ENCODE measurements at regions of chr5 and their contacts with region 1.

Region 1: DNA sequence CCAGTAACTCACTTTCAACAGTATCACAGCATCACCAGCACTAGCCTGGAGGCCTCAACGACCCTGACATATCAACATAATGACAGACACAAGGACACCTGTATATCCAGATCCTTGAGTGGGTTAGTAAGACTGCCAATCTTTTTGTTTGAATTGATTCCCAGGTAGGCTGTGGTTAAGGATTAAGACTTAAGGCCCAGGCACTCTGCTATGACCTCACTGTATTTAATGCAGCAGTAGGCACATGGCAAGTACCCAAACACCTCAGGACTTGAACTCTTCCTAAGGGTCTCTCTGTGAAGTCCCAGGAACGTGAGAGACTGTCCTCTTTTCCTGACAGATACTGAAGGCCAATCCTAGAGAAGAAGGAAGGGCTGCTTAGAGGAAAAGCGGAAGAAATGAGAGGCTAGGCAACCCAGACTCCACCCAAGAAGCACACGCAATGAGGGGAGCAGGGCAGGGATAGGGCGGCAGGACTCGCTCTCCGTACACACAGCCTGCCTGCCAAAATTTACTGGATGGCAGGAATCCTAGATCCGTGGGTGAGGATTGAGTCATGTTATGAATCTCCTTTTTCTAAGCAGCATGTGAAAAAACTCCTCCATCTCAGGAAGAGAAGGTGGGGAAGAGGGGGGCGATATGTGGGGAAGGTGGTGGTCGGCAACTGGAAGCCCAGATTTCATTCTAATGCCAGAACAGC is 93.4 kb downstream of the SIL1 start:
- DNase-seq: peak; percentile 90
- H3K4me3 ChIP-seq: peak overlapping the region in 1 of 4 donors; percentile 0
- H3K27ac ChIP-seq: peak overlapping the region; percentile 72 to 88 (median 84)
- H3K4me1 ChIP-seq: peaks cover 0 to 55% (median 48%) of the 10 kb centered on the region in 4 donors
- H3K27me3 ChIP-seq: no peaks in the 10 kb centered on the region
- CTCF ChIP-seq: no peak
- EP300 ChIP-seq: no peak
- POLR2A ChIP-seq: no peak

Region 2: DNA sequence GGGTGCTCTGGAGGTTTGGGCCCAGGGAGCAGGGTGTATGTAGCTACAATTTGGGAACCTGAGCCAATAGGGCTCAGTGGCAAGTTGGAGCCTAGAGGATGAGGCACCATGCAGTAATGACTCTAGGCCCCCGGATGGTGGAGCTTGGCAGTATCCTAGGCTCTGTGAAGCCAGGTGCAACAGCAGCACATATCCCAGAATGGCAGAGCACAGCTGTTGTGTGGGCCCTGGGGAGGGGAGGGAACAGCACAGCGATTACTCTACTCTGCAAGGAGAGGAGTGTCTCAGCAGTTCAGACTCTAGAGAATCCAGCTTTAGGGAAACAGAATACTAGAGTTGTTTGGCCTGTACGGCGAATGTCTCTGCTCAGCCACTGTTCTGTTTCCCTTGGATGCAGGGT is 285.6 kb before region 1 on chr5:
- intact Hi-C with region 1: no loop called
- DNase-seq: no peak
- H3K4me3 ChIP-seq: no peak overlapping the region
- H3K27ac ChIP-seq: no peak overlapping the region
- H3K4me1 ChIP-seq: peaks cover 0 to 27% (median 23%) of the 10 kb centered on the region in 4 donors
- H3K27me3 ChIP-seq: no peaks in the 10 kb centered on the region
- CTCF ChIP-seq: no peak
- EP300 ChIP-seq: no peak
- POLR2A ChIP-seq: no peak

Region 3: GRCh38 chr5:139197710-139198669 is 93.3 kb after region 1 on chr5 and contains the start of gene SIL1:
- intact Hi-C with region 1: loop called (anchors 5 kb)
- DNase-seq: peak; percentile 98
- H3K4me3 ChIP-seq: peak within 1 kb of the TSS; percentile 63 to 75 (median 69)
- H3K27ac ChIP-seq: peak within 1 kb of the TSS; percentile 90 to 95 (median 92)
- H3K4me1 ChIP-seq: peaks cover 0 to 18% (median 10%) of the 10 kb centered on the region in 4 donors
- H3K27me3 ChIP-seq: no peaks in the 10 kb centered on the region
- CTCF ChIP-seq: no peak
- EP300 ChIP-seq: no peak
- POLR2A ChIP-seq: peak; percentile 80 to 84
- total RNA-seq, gene SIL1: 23.2 to 39.2 (median 34.9) TPM

Region 4: DNA sequence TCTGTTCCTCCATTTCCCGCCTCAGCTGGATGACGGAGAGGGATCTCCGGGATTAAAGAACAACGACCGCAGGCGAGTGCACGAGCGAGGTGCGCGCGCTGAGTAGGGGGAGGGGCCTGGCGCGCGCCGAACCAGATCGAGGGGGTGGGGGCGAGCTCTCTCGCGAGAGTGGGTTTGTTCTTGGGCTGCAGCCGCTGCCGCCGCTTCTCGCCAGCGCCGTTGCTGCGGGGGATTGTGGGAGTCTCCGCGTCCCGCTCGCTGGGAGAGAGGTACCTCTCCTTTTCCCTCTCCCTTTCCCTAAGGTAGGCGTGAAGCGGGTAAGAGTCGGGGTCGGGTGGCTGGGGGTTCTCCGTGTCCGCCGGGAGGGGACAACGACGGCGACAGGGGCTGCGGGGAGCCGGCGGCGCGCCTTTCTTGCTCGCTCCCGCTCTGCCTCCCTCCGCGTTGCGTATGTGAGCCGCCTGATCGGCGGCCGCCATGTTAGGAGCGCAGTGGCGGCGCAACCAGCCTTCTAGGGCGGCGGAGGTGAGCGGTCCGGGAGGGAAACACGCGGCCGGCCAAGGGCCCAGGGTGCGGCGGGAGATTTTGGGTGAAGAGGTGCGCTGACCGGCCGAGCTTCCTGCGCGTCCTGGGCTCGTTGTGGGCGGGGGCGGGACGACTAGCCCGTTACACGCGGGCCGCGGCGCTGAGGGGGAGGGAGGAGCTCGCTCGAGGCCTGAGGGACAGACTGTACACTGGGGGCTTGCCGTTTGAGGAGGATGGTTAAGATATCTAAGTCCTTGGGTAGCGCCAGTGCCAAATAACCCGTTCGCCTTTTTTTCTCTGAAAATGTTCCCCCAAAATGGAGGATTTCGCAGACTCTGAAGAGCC is 189.0 kb after region 1 on chr5 and contains the start of gene MATR3:
- intact Hi-C with region 1: no loop called
- DNase-seq: peak; percentile 98
- H3K4me3 ChIP-seq: peak within 1 kb of the TSS; percentile 70 to 94 (median 72)
- H3K27ac ChIP-seq: peak within 1 kb of the TSS; percentile 94 to 100 (median 99)
- H3K4me1 ChIP-seq: peaks cover 0 to 45% (median 39%) of the 10 kb centered on the region in 4 donors
- H3K27me3 ChIP-seq: no peaks in the 10 kb centered on the region
- CTCF ChIP-seq: no peak
- EP300 ChIP-seq: peak in 1 of 4 donors; percentile 61
- POLR2A ChIP-seq: peak; percentile 98
- total RNA-seq, gene MATR3: 194 to 272 (median 228) TPM

Measured in sigmoid colon (tissue), 7 donors.